ENCODE measurements at regions of chr1 and their contacts with region 1.

Region 1: DNA sequence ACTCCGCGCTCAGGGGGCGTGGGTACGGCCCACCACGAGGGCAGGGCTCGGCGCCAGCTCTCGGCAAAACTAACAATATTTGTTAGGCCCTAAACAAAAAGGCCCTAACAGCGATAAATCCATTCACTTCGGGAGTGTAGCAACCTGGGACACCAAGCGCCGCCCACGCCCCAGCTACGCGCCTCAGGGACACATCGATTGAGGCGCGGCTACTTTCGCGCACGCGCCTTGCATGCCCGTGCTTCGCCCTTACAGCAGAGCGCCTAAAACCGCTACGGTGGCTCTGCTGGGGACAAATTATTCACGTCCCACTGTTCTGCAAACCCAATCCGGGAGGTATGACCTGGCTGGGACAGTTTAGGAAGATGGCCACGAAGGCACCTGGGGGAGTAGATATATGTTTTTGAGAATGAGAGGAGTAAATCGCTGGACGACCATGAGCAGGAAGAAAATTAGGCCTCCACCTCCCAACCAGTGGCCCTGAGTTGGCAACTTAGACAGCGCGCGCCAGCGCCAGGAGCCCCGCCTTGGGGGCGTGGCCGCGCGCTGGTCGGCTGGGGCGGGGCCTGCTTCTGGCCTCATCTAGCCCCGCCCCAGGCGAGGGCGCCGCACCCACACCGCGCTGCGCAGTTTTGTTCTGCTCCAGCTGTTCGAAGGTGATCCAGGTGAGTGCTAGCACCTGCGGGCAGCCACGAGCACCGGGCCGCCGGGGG is at the start of gene MGST3:
- DNase-seq: peak; percentile 83 to 90
- H3K4me3 ChIP-seq: peak within 1 kb of the TSS; percentile 75
- H3K27ac ChIP-seq: peak within 1 kb of the TSS; percentile 80
- H3K4me1 ChIP-seq: peaks cover 30% of the 10 kb centered on the region
- H3K27me3 ChIP-seq: no peaks in the 10 kb centered on the region
- CTCF ChIP-seq: no peak
- total RNA-seq, gene MGST3: 67.2 and 90.1 TPM in 2 replicates

Region 2: GRCh38 chr1:165162671-165163241 is 468.0 kb before region 1 on chr1:
- CTCF ChIA-PET with region 1: no interaction called
- POLR2A ChIA-PET with region 1: interaction called, 5 read pairs
- intact Hi-C with region 1: loop called (anchors 5 kb)
- DNase-seq: peak; percentile 84 to 94
- H3K4me3 ChIP-seq: peak overlapping the region; percentile 25; the same call in 1 of the 2 replicates
- H3K27ac ChIP-seq: peak overlapping the region; percentile 81
- H3K4me1 ChIP-seq: peaks cover 69% of the 10 kb centered on the region
- H3K27me3 ChIP-seq: no peaks in the 10 kb centered on the region
- CTCF ChIP-seq: no peak

Region 3: DNA sequence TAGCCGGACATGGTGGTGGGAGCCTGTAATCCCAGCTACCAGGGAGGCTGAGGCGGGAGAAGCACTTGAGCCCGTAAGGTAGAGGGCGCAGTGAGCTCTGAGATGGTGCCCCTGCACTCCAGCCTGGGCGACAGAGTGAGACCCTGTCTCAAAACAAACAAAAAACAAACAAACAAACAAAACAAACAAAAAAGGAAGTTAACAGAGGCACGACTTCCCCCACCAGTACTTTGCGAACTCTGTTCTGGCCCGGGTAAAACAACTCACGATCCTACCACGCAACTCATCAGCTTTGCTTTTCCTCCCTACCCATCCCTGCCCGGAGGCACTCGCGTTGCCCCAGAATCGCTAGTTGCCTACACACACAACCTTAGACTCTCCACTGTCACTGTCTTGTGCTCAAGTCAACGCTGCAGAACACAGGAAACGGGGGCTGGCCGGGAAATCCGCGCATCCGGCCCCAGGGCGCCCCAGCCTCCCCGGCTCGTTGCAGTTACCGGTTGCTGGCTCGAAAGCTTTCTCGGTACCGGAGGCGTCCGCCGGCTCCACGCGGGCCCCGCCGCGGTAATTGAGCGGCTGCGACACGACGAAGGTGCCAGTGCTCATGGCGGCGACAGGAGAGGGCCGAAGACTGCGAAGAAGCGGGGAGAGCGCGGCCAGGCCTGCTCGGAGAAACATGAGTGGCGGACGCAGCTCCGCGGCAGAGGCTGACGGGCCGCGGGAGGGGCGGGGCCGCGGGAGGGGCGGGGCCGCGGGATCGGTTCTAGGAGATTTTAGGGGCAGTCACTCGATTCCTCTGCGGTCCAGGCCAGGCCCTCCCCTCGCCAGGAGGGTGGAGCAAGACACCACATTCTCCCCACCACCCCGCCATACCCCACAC is 67.3 kb after region 1 on chr1 and contains the start of gene ALDH9A1:
- CTCF ChIA-PET with region 1: no interaction called
- POLR2A ChIA-PET with region 1: interaction called, 3 read pairs
- intact Hi-C with region 1: loop called (anchors 1 kb)
- DNase-seq: peak; percentile 79 to 89
- H3K4me3 ChIP-seq: peak within 1 kb of the TSS; percentile 65
- H3K27ac ChIP-seq: peak within 1 kb of the TSS; percentile 62
- H3K4me1 ChIP-seq: peaks cover 20% of the 10 kb centered on the region
- H3K27me3 ChIP-seq: no peaks in the 10 kb centered on the region
- CTCF ChIP-seq: peak; percentile 36; the same call in 1 of the 2 replicates
- total RNA-seq, gene ALDH9A1: 31.8 and 42.5 TPM in 2 replicates

Region 4: DNA sequence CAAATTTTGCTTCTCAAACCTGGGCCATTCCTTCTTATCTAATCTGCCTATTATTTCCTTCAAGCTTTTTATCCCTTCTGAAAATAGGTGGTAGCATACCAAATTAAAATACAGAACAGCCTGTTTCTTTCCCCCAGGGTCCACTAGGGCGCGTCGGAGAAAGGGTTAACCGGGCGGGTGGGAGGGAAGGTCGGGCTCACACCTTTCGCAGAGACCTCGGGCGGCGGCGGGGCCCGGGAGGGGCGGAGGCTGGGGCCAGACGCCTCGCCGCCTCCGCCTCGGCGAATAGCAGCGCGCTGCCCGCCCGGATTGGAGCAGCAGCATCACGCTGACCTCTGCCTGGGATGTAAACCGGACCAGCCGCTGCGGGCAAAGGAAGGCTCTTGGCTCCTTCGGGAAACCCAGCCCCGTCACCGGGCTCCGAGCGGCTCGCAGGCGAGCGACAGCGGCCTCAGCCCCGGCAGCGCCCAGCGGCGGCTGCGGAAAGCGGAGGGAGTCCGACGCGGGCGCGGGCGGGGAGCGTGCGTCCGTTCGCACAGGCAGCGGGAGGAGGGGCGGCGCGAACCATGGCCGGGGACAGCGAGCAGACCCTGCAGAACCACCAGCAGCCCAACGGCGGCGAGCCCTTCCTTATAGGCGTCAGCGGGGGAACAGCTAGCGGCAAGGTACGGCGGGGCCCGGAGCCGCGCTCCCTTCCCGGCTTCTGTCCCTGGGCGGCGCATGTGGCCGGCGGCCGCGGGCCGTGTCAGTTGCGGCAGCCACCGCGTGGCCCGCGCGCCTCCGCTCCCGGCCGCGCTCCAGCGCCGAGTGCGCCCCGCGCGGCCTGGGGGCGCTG is 196.7 kb after region 1 on chr1 and contains the start of gene UCK2:
- CTCF ChIA-PET with region 1: no interaction called
- POLR2A ChIA-PET with region 1: no interaction called
- intact Hi-C with region 1: loop called (anchors 10 kb)
- DNase-seq: peak; percentile 72 to 80
- H3K4me3 ChIP-seq: peak within 1 kb of the TSS; percentile 62
- H3K27ac ChIP-seq: peak within 1 kb of the TSS; percentile 79
- H3K4me1 ChIP-seq: peaks cover 17% of the 10 kb centered on the region
- H3K27me3 ChIP-seq: no peaks in the 10 kb centered on the region
- CTCF ChIP-seq: no peak; the same call in 1 of the 2 replicates
- total RNA-seq, gene UCK2: 54.8 and 59.9 TPM in 2 replicates

Region 5: GRCh38 chr1:166875734-166876539 is 1245.2 kb after region 1 on chr1 and contains the start of gene TADA1:
- CTCF ChIA-PET with region 1: no interaction called
- POLR2A ChIA-PET with region 1: no interaction called
- intact Hi-C with region 1: loop called (anchors 10 kb)
- DNase-seq: peak; percentile 91 to 96
- H3K4me3 ChIP-seq: peak within 1 kb of the TSS; percentile 87
- H3K27ac ChIP-seq: peak within 1 kb of the TSS; percentile 76
- H3K4me1 ChIP-seq: peaks cover 20% of the 10 kb centered on the region
- H3K27me3 ChIP-seq: no peaks in the 10 kb centered on the region
- CTCF ChIP-seq: no peak
- total RNA-seq, gene TADA1: 5.2 and 5.6 TPM in 2 replicates